Ovary (tissue), 10 donors: ENCODE measurements at regions of chr1 and their contacts with region 1.

Region 1: DNA sequence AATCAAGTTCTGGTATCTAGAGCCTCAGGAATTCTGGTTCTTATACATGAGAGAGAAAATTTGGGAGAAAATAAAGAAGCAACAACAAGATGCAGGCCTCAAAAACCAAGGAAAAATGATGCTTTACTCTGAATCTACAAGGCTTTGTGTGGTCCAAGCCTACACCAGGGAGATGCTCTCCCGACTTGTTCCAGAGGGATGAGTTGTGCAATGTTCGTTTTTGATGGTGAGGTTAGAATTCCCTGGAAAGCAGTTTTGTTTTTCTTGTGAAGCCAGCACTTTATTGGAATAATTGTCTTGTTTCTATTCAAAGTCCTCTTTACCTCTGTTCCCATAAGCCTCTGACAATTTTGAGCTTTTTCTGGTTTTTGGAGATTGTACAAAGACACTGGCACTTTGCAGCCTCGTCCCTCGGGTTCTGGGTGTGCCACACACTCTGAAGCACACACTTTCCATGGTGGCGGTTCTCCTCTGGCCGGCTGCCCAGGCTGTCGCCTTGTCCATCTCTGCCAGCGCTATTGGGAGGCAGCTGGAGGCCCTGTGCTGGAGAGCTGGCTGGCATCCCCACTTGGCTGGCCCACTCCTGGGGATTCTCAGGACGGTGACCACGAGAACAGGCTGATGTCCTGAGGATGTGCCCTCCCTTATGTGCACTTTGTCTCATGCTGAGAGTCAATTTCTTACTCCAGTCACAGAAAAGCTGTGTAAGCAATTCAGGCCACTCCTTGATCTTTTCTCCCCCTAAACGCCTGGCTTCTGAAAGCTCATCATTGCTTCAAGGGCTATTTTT is 70.2 kb downstream of the EDEM3 start:
- DNase-seq: peak in 1 of 5 donors; percentile 44
- H3K4me3 ChIP-seq: no peak overlapping the region
- H3K27ac ChIP-seq: no peak overlapping the region
- H3K4me1 ChIP-seq: no peaks in the 10 kb centered on the region
- H3K27me3 ChIP-seq: no peaks in the 10 kb centered on the region
- CTCF ChIP-seq: no peak
- EP300 ChIP-seq: no peak
- POLR2A ChIP-seq: no peak

Region 2: GRCh38 chr1:184075055-184076029 is 609.1 kb before region 1 on chr1:
- intact Hi-C with region 1: loop called in 1 of 4 experiments (anchors 10 kb)
- DNase-seq: peak in 3 of 5 donors; percentile 18 to 51 (median 19)
- H3K4me3 ChIP-seq: no peak overlapping the region
- H3K27ac ChIP-seq: peak overlapping the region in 1 of 2 donors; percentile 35
- H3K4me1 ChIP-seq: no peaks in the 10 kb centered on the region
- H3K27me3 ChIP-seq: no peaks in the 10 kb centered on the region
- CTCF ChIP-seq: peak; percentile 53 to 87 (median 84)
- EP300 ChIP-seq: no peak
- POLR2A ChIP-seq: no peak

Region 3: DNA sequence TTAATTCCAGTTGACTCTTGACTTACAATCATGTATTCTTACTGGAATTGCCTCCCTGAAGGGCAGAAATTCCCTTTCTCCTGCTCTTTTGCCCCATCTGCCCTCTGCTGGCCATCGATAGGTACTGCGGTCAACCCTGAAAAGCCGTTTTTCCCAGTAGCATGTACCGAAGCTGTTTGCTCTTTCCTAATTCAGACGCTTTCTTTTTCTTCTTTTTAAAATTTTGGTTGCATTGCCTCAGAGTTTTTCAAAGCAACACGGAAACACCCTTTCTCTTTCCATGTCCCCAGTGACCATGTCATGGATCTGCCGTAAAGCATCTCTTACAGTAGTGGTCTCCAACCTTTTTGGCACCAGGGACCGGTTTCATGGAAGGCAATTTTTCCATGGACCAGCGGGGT is 461.8 kb before region 1 on chr1:
- intact Hi-C with region 1: loop called in 1 of 4 experiments (anchors 10 kb)
- DNase-seq: peak in 3 of 5 donors; percentile 37 to 47 (median 40)
- H3K4me3 ChIP-seq: no peak overlapping the region
- H3K27ac ChIP-seq: no peak overlapping the region
- H3K4me1 ChIP-seq: no peaks in the 10 kb centered on the region
- H3K27me3 ChIP-seq: no peaks in the 10 kb centered on the region
- CTCF ChIP-seq: peak in 2 of 3 donors; percentile 55 to 71
- EP300 ChIP-seq: no peak
- POLR2A ChIP-seq: no peak